ENCODE measurements at regions of chr5 and their contacts with region 1.

Region 1: DNA sequence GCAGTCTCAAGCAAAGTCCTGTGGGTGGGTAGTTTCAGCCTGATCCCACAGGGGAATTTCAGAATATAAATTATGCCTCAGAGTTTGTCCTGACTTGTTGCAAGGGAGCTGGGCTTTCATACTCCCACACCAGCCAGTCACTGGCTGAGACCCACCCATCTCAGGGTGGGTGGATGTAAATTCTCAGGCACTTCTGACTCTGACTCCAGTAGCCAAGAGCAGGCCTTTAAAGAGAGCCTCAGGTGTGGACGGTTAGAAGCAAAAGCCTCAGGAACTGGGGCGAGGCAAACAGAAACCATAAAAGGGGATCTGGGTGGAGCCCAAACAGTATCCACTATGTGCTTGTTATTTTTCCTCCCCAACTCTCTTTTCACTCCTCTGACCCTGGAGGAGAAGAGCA is 28.6 kb upstream of the FBXW11 start:
- DNase-seq: no peak
- ATAC-seq: no peak
- H3K4me3 ChIP-seq: no peak overlapping the region
- H3K27ac ChIP-seq: no peak overlapping the region
- H3K4me1 ChIP-seq: no peaks in the 10 kb centered on the region
- H3K27me3 ChIP-seq: no peaks in the 10 kb centered on the region
- CTCF ChIP-seq: no peak

Region 2: GRCh38 chr5:172052450-172053236 is 17.6 kb after region 1 on chr5:
- CTCF ChIA-PET with region 1: no interaction called
- POLR2A ChIA-PET with region 1: interaction called, 16 read pairs
- in situ Hi-C with region 1: no loop called
- intact Hi-C with region 1: no loop called
- DNase-seq: no peak
- ATAC-seq: peak; percentile 39; the same call in 1 of the 2 replicates
- H3K4me3 ChIP-seq: no peak overlapping the region
- H3K27ac ChIP-seq: no peak overlapping the region
- H3K4me1 ChIP-seq: no peaks in the 10 kb centered on the region
- H3K27me3 ChIP-seq: no peaks in the 10 kb centered on the region
- CTCF ChIP-seq: no peak; the same call in 1 of the 2 replicates

Region 3: GRCh38 chr5:172065501-172065990 is 30.5 kb after region 1 on chr5:
- CTCF ChIA-PET with region 1: interaction called, 3 read pairs
- POLR2A ChIA-PET with region 1: interaction called, 10 read pairs
- in situ Hi-C with region 1: no loop called
- intact Hi-C with region 1: no loop called
- DNase-seq: no peak
- ATAC-seq: no peak
- H3K4me3 ChIP-seq: no peak overlapping the region
- H3K27ac ChIP-seq: no peak overlapping the region
- H3K4me1 ChIP-seq: no peaks in the 10 kb centered on the region
- H3K27me3 ChIP-seq: no peaks in the 10 kb centered on the region
- CTCF ChIP-seq: no peak

Region 4: GRCh38 chr5:172133359-172134029 is 98.5 kb after region 1 on chr5:
- CTCF ChIA-PET with region 1: no interaction called
- POLR2A ChIA-PET with region 1: no interaction called
- in situ Hi-C with region 1: no loop called
- intact Hi-C with region 1: no loop called
- DNase-seq: no peak
- ATAC-seq: no peak
- H3K4me3 ChIP-seq: no peak overlapping the region
- H3K27ac ChIP-seq: no peak overlapping the region
- H3K4me1 ChIP-seq: no peaks in the 10 kb centered on the region
- H3K27me3 ChIP-seq: no peaks in the 10 kb centered on the region
- CTCF ChIP-seq: no peak